Posterior cingulate gyrus (tissue), 11 donors: ENCODE measurements at regions of chr3 and their contacts with region 1.

Region 1: GRCh38 chr3:58188173-58188564 is 22.6 kb downstream of the DNASE1L3 start:
- DNase-seq: no peak

Region 2: GRCh38 chr3:58237238-58237940 is 49.2 kb after region 1 on chr3 and contains the start of gene ABHD6:
- intact Hi-C with region 1: loop called (anchors 5 kb)
- DNase-seq: peak; percentile 58 to 96 (median 80)

Region 3: DNA sequence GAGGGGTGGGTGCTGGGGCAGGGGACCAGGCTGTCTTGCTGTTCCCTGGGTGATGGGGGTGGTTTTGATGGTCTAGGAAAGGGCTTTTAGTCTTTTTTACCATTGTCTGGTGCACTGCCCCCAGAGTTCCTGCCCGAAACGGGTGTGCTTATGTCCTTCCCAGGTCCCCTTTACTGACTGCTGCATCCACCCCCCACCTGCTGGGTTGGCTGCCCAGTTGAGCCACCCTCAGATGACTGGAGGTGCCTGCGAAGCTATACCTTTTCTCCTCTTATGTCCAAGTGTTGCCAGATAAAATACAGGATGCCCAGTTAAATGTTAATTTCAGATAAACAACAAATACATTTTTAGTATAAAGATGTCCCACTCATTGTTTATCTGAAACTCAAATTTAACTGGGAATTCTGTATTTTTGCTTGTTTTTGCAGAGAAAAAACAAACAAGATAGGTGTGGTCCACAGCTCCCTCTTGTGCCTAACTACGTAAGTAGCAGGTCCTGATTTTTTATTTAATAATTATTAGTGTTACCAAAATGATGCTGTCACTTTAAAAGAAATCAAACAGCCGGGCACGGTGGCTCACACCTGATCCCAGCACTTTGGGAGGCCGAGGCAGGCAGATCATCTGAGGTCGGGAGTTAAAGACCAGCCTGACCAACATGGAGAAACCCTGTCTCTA is 111.8 kb after region 1 on chr3:
- intact Hi-C with region 1: loop called (anchors 1 kb)
- DNase-seq: no peak

Region 4: GRCh38 chr3:58414538-58415197 is 226.5 kb after region 1 on chr3:
- intact Hi-C with region 1: loop called (anchors 10 kb)
- DNase-seq: peak in 3 of 10 donors; percentile 27 to 65 (median 38)

Region 5: DNA sequence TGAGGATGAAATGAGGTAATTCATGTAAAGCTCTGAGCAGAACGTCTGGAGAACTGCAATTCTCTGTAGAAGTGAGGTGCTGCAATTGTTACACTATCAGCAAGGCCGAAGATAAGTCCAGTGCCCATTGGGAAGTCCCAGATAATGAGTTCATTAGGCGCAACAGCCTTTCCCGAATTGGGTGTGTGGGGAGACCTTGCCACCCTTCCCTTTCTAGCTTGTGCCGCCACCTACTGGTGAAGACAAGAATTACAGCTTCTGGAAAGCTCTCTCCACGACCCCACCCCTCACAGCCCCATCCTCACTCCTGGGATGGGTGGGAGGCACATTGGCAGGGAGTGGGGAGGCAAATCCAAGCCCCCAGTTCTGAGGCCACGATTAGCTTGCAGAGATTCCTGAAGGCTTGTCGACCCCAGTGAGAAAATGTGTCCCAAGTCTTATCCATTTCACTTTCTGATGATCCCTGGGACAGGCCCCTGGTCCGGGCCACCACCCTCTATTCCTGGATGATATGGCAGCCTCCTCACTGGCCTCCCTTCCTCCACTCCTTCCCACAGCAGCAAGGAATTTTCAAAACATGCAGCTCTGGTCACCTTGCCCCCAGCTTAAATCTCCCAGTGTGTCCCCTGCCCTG is 442.0 kb after region 1 on chr3:
- intact Hi-C with region 1: loop called (anchors 5 kb)
- DNase-seq: peak in 8 of 10 donors; percentile 35 to 88 (median 75)